ENCODE measurements at regions of chr13 and their contacts with region 1.

Region 1: GRCh38 chr13:92355213-92355612 is 871.4 kb upstream of the GPC6 start:
- DNase-seq: no peak
- ATAC-seq: peak in 1 of 8 donors; percentile 52
- H3K4me3 ChIP-seq: no peak overlapping the region
- H3K27ac ChIP-seq: no peak overlapping the region
- H3K4me1 ChIP-seq: no peaks in the 10 kb centered on the region
- H3K27me3 ChIP-seq: no peaks in the 10 kb centered on the region
- CTCF ChIP-seq: peak in 7 of 9 donors; percentile 10 to 48 (median 36)

Region 2: GRCh38 chr13:92187378-92187989 is 167.7 kb before region 1 on chr13:
- intact Hi-C with region 1: loop called in 5 of 10 experiments (anchors 5 to 10 kb)
- DNase-seq: no peak
- ATAC-seq: peak in 1 of 8 donors; percentile 45
- H3K4me3 ChIP-seq: no peak overlapping the region
- H3K27ac ChIP-seq: no peak overlapping the region
- H3K4me1 ChIP-seq: no peaks in the 10 kb centered on the region
- H3K27me3 ChIP-seq: no peaks in the 10 kb centered on the region
- CTCF ChIP-seq: peak; percentile 51 to 85 (median 78)

Region 3: GRCh38 chr13:92265408-92265807 is 89.8 kb before region 1 on chr13:
- intact Hi-C with region 1: no loop called
- DNase-seq: no peak
- ATAC-seq: peak in 7 of 8 donors; percentile 42 to 75 (median 64)
- H3K4me3 ChIP-seq: no peak overlapping the region
- H3K27ac ChIP-seq: peak overlapping the region in 4 of 10 donors; percentile 4 to 38 (median 18)
- H3K4me1 ChIP-seq: peaks cover 0 to 5% (median 0%) of the 10 kb centered on the region in 9 donors
- H3K27me3 ChIP-seq: no peaks in the 10 kb centered on the region
- CTCF ChIP-seq: no peak

Measured in heart right ventricle (tissue), 16 donors.